Caco-2 (cell line): ENCODE measurements at regions of chr2 and their contacts with region 1.

Region 1: GRCh38 chr2:85420536-85421259 is 2.2 kb downstream of the SH2D6 start:
- DNase-seq: peak; percentile 90 to 96
- H3K4me3 ChIP-seq: no peak overlapping the region
- H3K4me3 Mint-ChIP-seq: peak overlapping the region; percentile 69
- H3K27ac Mint-ChIP-seq: peak overlapping the region; percentile 80
- H3K4me1 ChIP-seq: peaks cover 47% of the 10 kb centered on the region
- H3K4me1 Mint-ChIP-seq: peaks cover 36% of the 10 kb centered on the region
- H3K27me3 ChIP-seq: no peaks in the 10 kb centered on the region
- H3K27me3 Mint-ChIP-seq: no peaks in the 10 kb centered on the region
- CTCF ChIP-seq: peak; percentile 99 to 100

Region 2: DNA sequence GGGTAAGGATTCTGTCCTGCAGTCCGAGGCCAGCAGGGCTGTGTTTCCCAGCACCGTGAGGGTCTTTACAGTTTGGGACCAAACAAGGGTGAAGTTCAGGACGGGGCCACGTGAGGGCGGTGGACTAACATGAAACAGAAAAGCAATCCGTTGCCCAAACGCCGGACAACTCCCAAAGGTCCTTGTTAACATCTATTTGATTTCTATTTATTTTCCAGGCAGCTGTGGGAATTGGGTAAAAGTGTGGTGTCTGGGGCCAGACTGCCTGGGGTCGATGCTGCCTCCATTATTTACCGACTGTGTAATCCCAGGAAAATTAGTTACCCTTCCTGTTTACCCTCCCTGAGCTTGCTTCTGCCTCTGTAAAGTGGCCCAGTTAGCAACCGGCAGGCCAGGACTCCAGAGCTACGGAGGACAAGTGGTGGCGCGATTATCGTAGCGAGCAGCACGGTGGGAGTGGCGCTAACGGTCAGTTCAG is 353.8 kb before region 1 on chr2:
- CTCF ChIA-PET with region 1: no interaction called
- POLR2A ChIA-PET with region 1: no interaction called
- intact Hi-C with region 1: loop called (anchors 10 kb)
- DNase-seq: peak; percentile 83 to 85
- H3K4me3 ChIP-seq: peak overlapping the region; percentile 30
- H3K4me3 Mint-ChIP-seq: peak overlapping the region; percentile 67
- H3K27ac Mint-ChIP-seq: no peak overlapping the region
- H3K4me1 ChIP-seq: 0 out of 2 replicates have a peak, but pooled peaks cover 5% of the 10 kb centered on the region
- H3K4me1 Mint-ChIP-seq: no peaks in the 10 kb centered on the region
- H3K27me3 ChIP-seq: no peaks in the 10 kb centered on the region
- H3K27me3 Mint-ChIP-seq: peaks cover 2% of the 10 kb centered on the region
- CTCF ChIP-seq: peak; percentile 88 to 91

Region 3: GRCh38 chr2:85288244-85288725 is 132.4 kb before region 1 on chr2:
- CTCF ChIA-PET with region 1: no interaction called
- POLR2A ChIA-PET with region 1: no interaction called
- intact Hi-C with region 1: no loop called
- DNase-seq: peak; percentile 55 to 61
- H3K4me3 ChIP-seq: no peak overlapping the region
- H3K4me3 Mint-ChIP-seq: peak overlapping the region; percentile 10
- H3K27ac Mint-ChIP-seq: peak overlapping the region; percentile 63
- H3K4me1 ChIP-seq: peaks cover 16% of the 10 kb centered on the region
- H3K4me1 Mint-ChIP-seq: peaks cover 24% of the 10 kb centered on the region
- H3K27me3 ChIP-seq: no peaks in the 10 kb centered on the region
- H3K27me3 Mint-ChIP-seq: no peaks in the 10 kb centered on the region
- CTCF ChIP-seq: no peak

Region 4: GRCh38 chr2:85340034-85340892 is 80.4 kb before region 1 on chr2:
- CTCF ChIA-PET with region 1: no interaction called
- POLR2A ChIA-PET with region 1: no interaction called
- intact Hi-C with region 1: no loop called
- DNase-seq: no peak
- H3K4me3 ChIP-seq: no peak overlapping the region
- H3K4me3 Mint-ChIP-seq: no peak overlapping the region
- H3K27ac Mint-ChIP-seq: no peak overlapping the region
- H3K4me1 ChIP-seq: no peaks in the 10 kb centered on the region
- H3K4me1 Mint-ChIP-seq: no peaks in the 10 kb centered on the region
- H3K27me3 ChIP-seq: no peaks in the 10 kb centered on the region
- H3K27me3 Mint-ChIP-seq: no peaks in the 10 kb centered on the region
- CTCF ChIP-seq: no peak

Region 5: DNA sequence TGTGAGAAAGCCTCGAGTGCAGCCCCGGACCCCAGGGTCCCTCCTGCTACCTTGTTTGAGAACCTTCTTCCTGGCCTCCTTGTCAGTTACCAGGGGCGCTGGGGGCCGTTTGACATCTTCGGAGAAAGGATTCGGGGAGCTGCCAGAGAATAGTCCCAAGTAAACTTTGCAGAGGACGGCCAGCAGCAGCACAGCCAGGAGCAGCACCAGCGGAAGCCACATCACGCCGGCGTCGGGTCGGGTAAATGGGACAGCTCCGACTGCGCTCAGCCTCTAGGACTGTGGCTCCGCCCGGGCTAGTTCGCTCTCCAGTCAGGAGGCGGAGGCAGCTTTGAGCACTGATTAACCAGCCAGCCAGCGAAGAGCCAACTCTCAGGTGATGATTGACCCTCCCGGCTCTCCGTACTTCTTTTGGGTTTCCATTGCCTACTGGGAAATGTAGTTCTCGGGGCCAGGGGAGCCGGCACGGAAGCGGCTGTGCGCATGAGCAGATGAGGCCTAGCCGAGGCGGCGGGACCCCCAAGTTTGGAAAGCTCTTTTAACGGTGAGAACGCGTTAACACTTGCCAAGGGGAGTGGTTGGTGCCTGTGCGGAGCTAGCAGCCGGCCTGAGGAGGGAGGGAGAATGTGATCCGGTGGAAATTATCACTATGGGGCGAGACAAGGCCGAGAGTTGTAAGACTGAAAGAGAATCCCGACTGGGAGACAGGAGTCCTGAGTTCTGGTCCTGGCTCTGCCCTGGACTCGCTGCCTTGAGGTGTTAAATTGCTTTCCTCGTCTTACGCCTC is 66.2 kb before region 1 on chr2 and contains the starts of genes ELMOD3 and RETSAT:
- CTCF ChIA-PET with region 1: interaction called, 3 read pairs
- POLR2A ChIA-PET with region 1: interaction called, 4 read pairs
- intact Hi-C with region 1: loop called (anchors 2 kb)
- DNase-seq: peak; percentile 99 to 100
- H3K4me3 ChIP-seq: peak within 1 kb of the TSS; percentile 49
- H3K4me3 Mint-ChIP-seq: peak within 1 kb of the TSS; percentile 99
- H3K27ac Mint-ChIP-seq: peak within 1 kb of the TSS; percentile 96
- H3K4me1 ChIP-seq: no peaks in the 10 kb centered on the region
- H3K4me1 Mint-ChIP-seq: no peaks in the 10 kb centered on the region
- H3K27me3 ChIP-seq: no peaks in the 10 kb centered on the region
- H3K27me3 Mint-ChIP-seq: no peaks in the 10 kb centered on the region
- CTCF ChIP-seq: no peak
- total RNA-seq, gene ELMOD3: 10.3 and 11.3 TPM in 2 replicates
- total RNA-seq, gene RETSAT: 31.1 and 32.3 TPM in 2 replicates

Region 6: DNA sequence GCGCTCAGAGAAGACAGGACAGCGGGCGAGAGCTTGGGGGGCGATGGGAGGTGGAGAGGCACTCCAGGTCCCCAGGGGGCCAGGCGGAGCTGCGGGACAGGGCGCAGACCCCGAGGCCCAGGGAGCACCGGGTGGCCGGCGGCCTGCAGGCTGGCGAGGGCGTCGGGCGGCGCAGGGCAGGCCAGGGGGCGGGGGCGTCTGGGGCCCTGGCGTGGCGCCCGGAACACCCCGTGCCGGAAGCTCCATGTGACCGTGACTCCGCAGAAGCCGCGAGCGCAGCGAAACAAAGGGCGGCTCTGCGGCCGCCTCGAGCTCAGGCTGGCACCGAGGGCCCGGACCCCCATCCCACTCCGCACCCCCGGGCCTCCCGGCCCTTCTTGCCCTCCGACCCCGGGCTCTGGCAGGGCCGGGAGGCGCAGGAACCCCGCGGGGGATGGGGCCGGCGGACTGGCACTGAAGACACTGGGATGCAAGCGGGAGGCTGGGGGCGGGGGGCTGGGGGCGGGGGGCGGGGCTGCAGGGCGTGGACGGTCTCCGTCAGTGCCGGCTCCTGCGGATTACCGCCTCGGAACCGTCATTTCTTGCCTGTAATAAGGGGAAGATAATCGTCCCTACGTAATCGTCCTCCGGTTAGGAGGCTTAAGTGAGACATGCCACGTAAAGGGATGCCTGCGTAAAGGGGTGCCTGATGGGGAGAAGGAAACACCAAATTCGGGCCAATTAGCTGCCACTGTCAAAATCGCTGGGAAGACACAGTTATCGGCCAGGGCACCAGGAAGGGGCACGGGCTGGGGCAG is 17.0 kb after region 1 on chr2:
- CTCF ChIA-PET with region 1: no interaction called
- POLR2A ChIA-PET with region 1: interaction called, 9 read pairs
- intact Hi-C with region 1: loop called (anchors 1 kb)
- DNase-seq: peak in 1 of 2 experiments; percentile 44
- H3K4me3 ChIP-seq: peak overlapping the region; percentile 40
- H3K4me3 Mint-ChIP-seq: peak overlapping the region; percentile 73
- H3K27ac Mint-ChIP-seq: peak overlapping the region; percentile 80
- H3K4me1 ChIP-seq: peaks cover 18% of the 10 kb centered on the region
- H3K4me1 Mint-ChIP-seq: peaks cover 6% of the 10 kb centered on the region
- H3K27me3 ChIP-seq: no peaks in the 10 kb centered on the region
- H3K27me3 Mint-ChIP-seq: no peaks in the 10 kb centered on the region
- CTCF ChIP-seq: no peak

Region 7: GRCh38 chr2:85504778-85505323 is 84.2 kb after region 1 on chr2:
- CTCF ChIA-PET with region 1: no interaction called
- POLR2A ChIA-PET with region 1: no interaction called
- intact Hi-C with region 1: loop called (anchors 1 kb)
- DNase-seq: no peak
- H3K4me3 ChIP-seq: no peak overlapping the region
- H3K4me3 Mint-ChIP-seq: no peak overlapping the region
- H3K27ac Mint-ChIP-seq: no peak overlapping the region
- H3K4me1 ChIP-seq: peaks cover 12% of the 10 kb centered on the region; the same call in 1 of the 2 replicates
- H3K4me1 Mint-ChIP-seq: no peaks in the 10 kb centered on the region
- H3K27me3 ChIP-seq: no peaks in the 10 kb centered on the region
- H3K27me3 Mint-ChIP-seq: no peaks in the 10 kb centered on the region
- CTCF ChIP-seq: no peak

Region 8: DNA sequence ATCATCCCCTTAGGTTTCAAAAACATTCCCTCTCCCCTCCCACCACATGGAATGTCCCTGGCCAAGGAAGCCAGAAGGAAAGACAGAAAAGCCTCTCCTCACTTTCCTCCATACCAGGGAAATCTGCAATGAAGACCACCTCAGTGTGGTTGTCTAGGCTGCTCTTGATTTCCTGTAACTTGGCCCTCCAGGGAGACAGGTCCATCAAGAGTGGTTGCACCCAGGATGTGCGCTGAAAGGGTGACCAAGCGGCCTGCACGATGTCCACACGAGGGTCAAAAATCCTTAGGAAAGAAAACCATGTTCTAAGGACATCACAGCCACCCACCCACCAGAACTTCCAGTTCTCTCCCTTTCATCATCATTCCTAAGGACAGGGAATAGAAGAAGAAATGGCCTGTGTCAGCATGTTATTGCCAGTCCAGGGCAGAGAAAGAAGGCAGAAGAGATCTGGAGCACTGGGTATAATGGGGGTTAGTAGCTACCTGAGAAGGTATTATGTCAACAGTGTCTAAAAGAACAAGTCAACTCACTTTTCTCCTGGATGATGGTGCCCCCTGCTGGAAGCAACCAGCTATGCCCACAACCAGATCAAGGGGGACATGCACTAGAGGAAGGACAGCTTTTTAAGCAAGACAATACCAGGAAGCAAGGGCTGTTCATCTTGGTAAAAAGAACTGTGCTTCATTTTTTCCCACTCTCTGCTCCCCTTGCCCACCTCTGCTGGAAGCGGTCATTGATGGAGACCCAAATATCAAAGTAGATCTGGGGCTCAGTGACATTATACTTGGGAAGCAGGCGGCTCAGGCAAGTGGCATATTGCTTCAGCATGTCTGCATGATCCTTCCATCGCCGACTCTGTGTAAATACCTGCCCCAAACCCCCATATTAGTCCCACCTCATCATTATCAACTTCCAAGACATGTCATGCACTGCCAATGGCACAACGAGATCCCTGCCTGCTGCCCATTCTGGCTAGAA is 131.3 kb after region 1 on chr2:
- CTCF ChIA-PET with region 1: interaction called, 67 read pairs
- POLR2A ChIA-PET with region 1: interaction called, 8 read pairs
- intact Hi-C with region 1: loop called (anchors 1 kb)
- DNase-seq: peak; percentile 81 to 89
- H3K4me3 ChIP-seq: no peak overlapping the region
- H3K4me3 Mint-ChIP-seq: no peak overlapping the region
- H3K27ac Mint-ChIP-seq: no peak overlapping the region
- H3K4me1 ChIP-seq: no peaks in the 10 kb centered on the region
- H3K4me1 Mint-ChIP-seq: no peaks in the 10 kb centered on the region
- H3K27me3 ChIP-seq: no peaks in the 10 kb centered on the region
- H3K27me3 Mint-ChIP-seq: no peaks in the 10 kb centered on the region
- CTCF ChIP-seq: peak; percentile 93

Region 9: GRCh38 chr2:85611705-85612587 is 191.2 kb after region 1 on chr2 and contains the start of gene C2orf68:
- CTCF ChIA-PET with region 1: no interaction called
- POLR2A ChIA-PET with region 1: interaction called, 3 read pairs
- intact Hi-C with region 1: loop called (anchors 1 kb)
- DNase-seq: peak; percentile 94 to 95
- H3K4me3 ChIP-seq: peak within 1 kb of the TSS; percentile 74
- H3K4me3 Mint-ChIP-seq: peak within 1 kb of the TSS; percentile 90
- H3K27ac Mint-ChIP-seq: peak within 1 kb of the TSS; percentile 86
- H3K4me1 ChIP-seq: no peaks in the 10 kb centered on the region
- H3K4me1 Mint-ChIP-seq: no peaks in the 10 kb centered on the region
- H3K27me3 ChIP-seq: no peaks in the 10 kb centered on the region
- H3K27me3 Mint-ChIP-seq: no peaks in the 10 kb centered on the region
- CTCF ChIP-seq: no peak
- total RNA-seq, gene C2orf68: 49.0 and 54.5 TPM in 2 replicates

Region 10: GRCh38 chr2:85772019-85772745 is 351.5 kb after region 1 on chr2:
- CTCF ChIA-PET with region 1: no interaction called
- POLR2A ChIA-PET with region 1: no interaction called
- intact Hi-C with region 1: no loop called
- DNase-seq: no peak
- H3K4me3 ChIP-seq: no peak overlapping the region
- H3K4me3 Mint-ChIP-seq: no peak overlapping the region
- H3K27ac Mint-ChIP-seq: no peak overlapping the region
- H3K4me1 ChIP-seq: no peaks in the 10 kb centered on the region
- H3K4me1 Mint-ChIP-seq: no peaks in the 10 kb centered on the region
- H3K27me3 ChIP-seq: no peaks in the 10 kb centered on the region
- H3K27me3 Mint-ChIP-seq: no peaks in the 10 kb centered on the region
- CTCF ChIP-seq: no peak